Heart left ventricle (tissue), 16 donors: ENCODE measurements at regions of chr7 and their contacts with region 1.

Region 1: GRCh38 chr7:73738612-73739374 is at the start of gene ABHD11:
- DNase-seq: peak; percentile 96 to 99 (median 97)
- ATAC-seq: peak; percentile 92 to 97 (median 94)
- H3K4me3 ChIP-seq: peak within 1 kb of the TSS; percentile 64 to 99 (median 78)
- H3K27ac ChIP-seq: peak within 1 kb of the TSS in 11 of 12 donors; percentile 64 to 91 (median 85)
- H3K4me1 ChIP-seq: peaks cover 0 to 29% (median 13%) of the 10 kb centered on the region in 12 donors
- H3K27me3 ChIP-seq: no peaks in the 10 kb centered on the region
- CTCF ChIP-seq: peak in 3 of 12 donors; percentile 3 to 13 (median 7)
- POLR2A ChIP-seq: peak in 1 of 2 donors; percentile 78
- total RNA-seq, gene ABHD11: 17.9 to 36.9 (median 25.0) TPM

Region 2: DNA sequence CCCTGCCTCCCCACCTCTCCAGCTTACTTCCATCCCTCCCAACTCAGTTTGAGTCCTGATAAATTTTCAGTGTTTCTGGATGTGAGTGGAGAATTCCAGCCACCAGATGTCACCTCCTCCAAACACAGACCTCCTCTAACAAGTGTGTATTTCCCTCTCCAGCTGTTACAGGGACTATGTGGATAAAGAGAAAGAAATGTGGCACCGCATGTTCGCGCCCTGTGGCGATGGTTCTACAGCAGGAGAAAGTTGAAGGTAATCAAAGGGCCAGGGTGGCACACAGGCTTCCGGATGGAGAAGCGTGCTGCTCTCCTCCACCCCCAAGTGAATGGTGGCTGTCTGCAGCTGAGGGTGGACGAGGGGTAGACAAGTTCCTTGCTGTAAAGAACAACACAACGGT is 396.1 kb before region 1 on chr7:
- intact Hi-C with region 1: loop called in 1 of 10 experiments (anchors 10 kb)
- DNase-seq: no peak
- ATAC-seq: peak; percentile 45 to 84 (median 76)
- H3K4me3 ChIP-seq: peak overlapping the region in 5 of 12 donors; percentile 3 to 45 (median 24)
- H3K27ac ChIP-seq: no peak overlapping the region
- H3K4me1 ChIP-seq: no peaks in the 10 kb centered on the region
- H3K27me3 ChIP-seq: peaks cover 0 to 13% (median 0%) of the 10 kb centered on the region in 9 donors
- CTCF ChIP-seq: peak in 11 of 12 donors; percentile 13 to 67 (median 44)
- POLR2A ChIP-seq: no peak

Region 3: GRCh38 chr7:73522105-73522872 is 216.5 kb before region 1 on chr7 and contains the start of gene BAZ1B:
- intact Hi-C with region 1: loop called in 1 of 10 experiments (anchors 1 kb)
- DNase-seq: peak; percentile 99
- ATAC-seq: peak; percentile 98 to 99 (median 98)
- H3K4me3 ChIP-seq: peak within 1 kb of the TSS; percentile 59 to 99 (median 90)
- H3K27ac ChIP-seq: peak within 1 kb of the TSS; percentile 81 to 97 (median 94)
- H3K4me1 ChIP-seq: peaks cover 11 to 64% (median 36%) of the 10 kb centered on the region in 12 donors
- H3K27me3 ChIP-seq: no peaks in the 10 kb centered on the region
- CTCF ChIP-seq: peak in 7 of 12 donors; percentile 6 to 47 (median 20)
- POLR2A ChIP-seq: peak; percentile 32 to 75
- total RNA-seq, gene BAZ1B: 30.1 to 45.0 (median 41.5) TPM

Region 4: DNA sequence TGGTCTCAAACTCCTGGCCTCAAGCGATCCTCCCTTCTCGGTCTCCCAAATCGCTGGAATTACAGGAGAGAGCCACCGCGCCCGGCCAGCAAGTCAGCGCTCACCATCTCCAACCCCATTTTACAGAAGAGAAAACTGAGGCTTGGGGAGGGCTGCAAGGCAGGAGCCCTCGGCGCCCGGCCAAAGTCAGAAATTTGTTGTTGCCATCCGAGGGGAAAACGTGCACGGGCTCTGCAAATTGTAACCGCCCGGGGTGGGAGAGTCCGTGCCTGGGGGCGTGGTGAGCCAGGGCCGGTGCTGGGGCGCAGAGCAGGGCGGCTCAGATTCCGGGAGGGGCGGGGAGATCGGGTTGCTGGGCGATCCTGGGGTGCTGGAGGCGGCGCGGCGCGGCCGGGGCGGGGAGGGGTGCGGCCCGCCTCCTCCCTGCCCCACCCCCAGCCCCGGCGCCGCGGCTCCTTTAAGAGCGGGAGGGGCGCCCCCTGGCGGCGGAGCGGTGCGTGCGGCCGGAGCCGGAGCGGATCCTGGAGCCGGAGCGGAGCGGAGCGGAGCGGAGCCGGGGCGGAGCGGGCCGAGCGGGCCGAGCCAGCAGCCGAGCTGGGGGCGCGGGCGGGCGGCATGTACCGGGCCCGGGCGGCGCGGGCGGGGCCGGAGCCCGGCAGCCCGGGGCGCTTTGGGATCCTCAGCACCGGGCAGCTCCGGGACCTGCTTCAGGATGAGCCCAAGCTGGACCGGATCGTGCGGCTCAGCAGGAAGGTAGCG is 71.3 kb before region 1 on chr7 and contains the start of gene VPS37D:
- intact Hi-C with region 1: loop called in 1 of 10 experiments (anchors 5 kb)
- DNase-seq: peak; percentile 89 to 96 (median 90)
- ATAC-seq: peak; percentile 60 to 95 (median 94)
- H3K4me3 ChIP-seq: peak within 1 kb of the TSS; percentile 34 to 97 (median 60)
- H3K27ac ChIP-seq: peak within 1 kb of the TSS in 3 of 12 donors; percentile 3 to 41 (median 19)
- H3K4me1 ChIP-seq: peaks cover 0 to 20% (median 8%) of the 10 kb centered on the region in 12 donors
- H3K27me3 ChIP-seq: no peaks in the 10 kb centered on the region
- CTCF ChIP-seq: peak; percentile 31 to 97 (median 79)
- POLR2A ChIP-seq: peak in 1 of 2 donors; percentile 19
- total RNA-seq, gene VPS37D: 1.9 to 2.9 (median 2.7) TPM

Region 5: DNA sequence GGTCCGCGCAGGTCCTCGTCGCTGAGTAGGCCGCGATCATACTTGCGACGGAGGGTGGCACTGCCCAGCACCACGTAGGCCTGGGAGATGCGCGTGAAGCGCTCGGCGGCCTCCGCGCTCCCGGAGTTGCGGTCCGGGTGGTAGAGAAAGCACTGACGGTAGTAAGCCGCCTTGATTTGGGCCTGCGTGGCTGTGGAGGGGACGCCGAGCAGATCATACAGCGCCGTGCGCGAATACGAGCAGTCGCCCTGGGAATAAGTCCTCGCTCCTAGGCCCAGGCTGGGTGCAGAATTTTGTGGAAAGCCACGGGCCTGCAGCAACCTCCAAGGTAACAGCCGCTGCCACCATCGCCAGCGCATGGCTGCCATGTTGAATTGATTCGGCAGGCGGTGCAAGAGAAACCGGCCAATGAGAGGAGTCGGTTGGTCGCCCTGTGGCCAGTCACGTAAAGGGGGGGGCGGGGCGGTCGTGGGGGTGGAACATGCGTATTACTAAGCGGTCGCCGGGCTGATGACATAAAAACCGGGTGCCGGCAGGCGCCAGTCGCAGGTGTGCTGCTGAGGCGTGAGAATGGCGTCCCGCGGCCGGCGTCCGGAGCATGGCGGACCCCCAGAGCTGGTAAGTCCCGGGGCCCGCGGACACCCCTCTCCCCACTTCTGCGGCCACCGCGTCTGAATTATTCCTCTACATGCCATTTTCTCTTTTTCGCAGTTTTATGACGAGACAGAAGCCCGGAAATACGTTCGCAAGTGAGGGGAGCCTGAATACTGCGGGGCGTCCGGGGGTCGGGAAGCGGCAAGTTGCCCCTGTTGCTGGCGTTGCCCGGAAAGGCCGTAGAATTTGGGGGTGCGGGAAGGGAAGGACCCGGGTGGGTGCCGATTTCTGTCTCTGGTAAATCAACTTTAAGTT is 55.5 kb before region 1 on chr7 and contains the starts of genes BUD23 and DNAJC30:
- intact Hi-C with region 1: loop called in 1 of 10 experiments (anchors 5 kb)
- DNase-seq: peak; percentile 97 to 99 (median 98)
- ATAC-seq: peak; percentile 95 to 98 (median 98)
- H3K4me3 ChIP-seq: peak within 1 kb of the TSS; percentile 74 to 100 (median 94)
- H3K27ac ChIP-seq: peak within 1 kb of the TSS; percentile 27 to 91 (median 84)
- H3K4me1 ChIP-seq: peaks cover 7 to 49% (median 31%) of the 10 kb centered on the region in 12 donors
- H3K27me3 ChIP-seq: no peaks in the 10 kb centered on the region
- CTCF ChIP-seq: peak in 3 of 12 donors; percentile 5 to 33 (median 23)
- POLR2A ChIP-seq: peak; percentile 22 to 77
- total RNA-seq, gene BUD23: 57.4 to 94.1 (median 68.6) TPM
- total RNA-seq, gene DNAJC30: 6.8 to 21.1 (median 15.6) TPM

Region 6: GRCh38 chr7:73842247-73842895 is 103.6 kb after region 1 on chr7 and contains the start of gene METTL27:
- intact Hi-C with region 1: loop called in 2 of 10 experiments (anchors 2 to 10 kb)
- DNase-seq: peak; percentile 92 to 96 (median 95)
- ATAC-seq: peak; percentile 96 to 99 (median 98)
- H3K4me3 ChIP-seq: peak within 1 kb of the TSS; percentile 41 to 84 (median 60)
- H3K27ac ChIP-seq: peak within 1 kb of the TSS in 7 of 12 donors; percentile 46 to 69 (median 61)
- H3K4me1 ChIP-seq: peaks cover 0 to 47% (median 10%) of the 10 kb centered on the region in 12 donors
- H3K27me3 ChIP-seq: no peaks in the 10 kb centered on the region
- CTCF ChIP-seq: no peak
- POLR2A ChIP-seq: peak in 1 of 2 donors; percentile 58
- total RNA-seq, gene METTL27: 0.30 to 2.7 (median 0.94) TPM in 6 of 9 donors, not detected in the others

Region 7: DNA sequence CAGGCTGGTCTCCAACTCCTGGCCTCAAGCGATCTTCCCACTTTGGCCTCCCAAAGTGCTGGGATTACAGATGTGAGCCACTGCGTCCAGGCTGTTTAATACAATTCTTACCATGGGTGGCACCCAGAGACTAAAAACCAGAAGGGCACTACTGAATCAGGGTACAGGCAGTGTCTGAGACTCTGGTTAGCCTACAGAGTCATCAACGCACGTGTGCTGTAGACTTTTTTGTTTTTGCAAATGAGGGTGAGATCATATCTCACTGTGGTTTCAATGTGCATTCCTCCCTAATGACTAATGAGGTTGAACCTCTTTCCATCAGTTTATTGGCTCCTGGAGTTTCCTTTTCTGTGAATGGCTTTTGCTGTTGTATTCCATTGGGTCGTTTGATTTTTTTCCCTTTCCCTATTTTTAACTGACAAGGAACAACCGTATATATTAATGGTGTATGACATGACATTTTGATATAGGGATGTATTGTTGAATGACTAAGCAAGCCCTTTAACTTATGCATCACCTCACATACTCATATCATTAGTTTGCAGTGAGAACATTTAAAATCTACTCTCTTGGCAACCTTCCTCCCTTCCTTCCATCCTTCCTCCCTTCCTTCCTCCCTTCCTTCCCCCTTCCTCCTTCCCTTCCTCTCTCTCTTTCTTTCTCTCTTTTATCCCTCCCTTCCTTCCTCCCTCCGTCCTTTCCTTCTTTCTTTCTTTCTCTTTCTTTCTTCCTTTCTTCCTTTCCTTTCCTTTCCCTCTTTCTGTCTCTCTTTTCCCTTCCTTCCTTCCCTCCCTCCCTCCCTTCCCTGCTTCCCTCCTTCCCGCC is 112.8 kb after region 1 on chr7:
- intact Hi-C with region 1: loop called in 2 of 10 experiments (anchors 10 kb)
- DNase-seq: no peak
- ATAC-seq: peak; percentile 55 to 84 (median 70)
- H3K4me3 ChIP-seq: no peak overlapping the region
- H3K27ac ChIP-seq: peak overlapping the region; percentile 16 to 79 (median 58)
- H3K4me1 ChIP-seq: peaks cover 0 to 24% (median 6%) of the 10 kb centered on the region in 12 donors
- H3K27me3 ChIP-seq: peaks cover 0 to 20% (median 0%) of the 10 kb centered on the region in 9 donors
- CTCF ChIP-seq: no peak
- POLR2A ChIP-seq: no peak